Posterior vena cava (tissue), 2 donors: ENCODE measurements at regions of chr2 and their contacts with region 1.

Region 1: GRCh38 chr2:235494716-235495372 is 1.0 kb downstream of the AGAP1 start:
- DNase-seq: peak; percentile 82

Region 2: GRCh38 chr2:233857511-233858141 is 1637.2 kb before region 1 on chr2:
- intact Hi-C with region 1: loop called in 1 of 2 experiments (anchors 5 kb)
- DNase-seq: no peak